B cell (primary cell): ENCODE measurements at regions of chr7 and their contacts with region 1.

Region 1: DNA sequence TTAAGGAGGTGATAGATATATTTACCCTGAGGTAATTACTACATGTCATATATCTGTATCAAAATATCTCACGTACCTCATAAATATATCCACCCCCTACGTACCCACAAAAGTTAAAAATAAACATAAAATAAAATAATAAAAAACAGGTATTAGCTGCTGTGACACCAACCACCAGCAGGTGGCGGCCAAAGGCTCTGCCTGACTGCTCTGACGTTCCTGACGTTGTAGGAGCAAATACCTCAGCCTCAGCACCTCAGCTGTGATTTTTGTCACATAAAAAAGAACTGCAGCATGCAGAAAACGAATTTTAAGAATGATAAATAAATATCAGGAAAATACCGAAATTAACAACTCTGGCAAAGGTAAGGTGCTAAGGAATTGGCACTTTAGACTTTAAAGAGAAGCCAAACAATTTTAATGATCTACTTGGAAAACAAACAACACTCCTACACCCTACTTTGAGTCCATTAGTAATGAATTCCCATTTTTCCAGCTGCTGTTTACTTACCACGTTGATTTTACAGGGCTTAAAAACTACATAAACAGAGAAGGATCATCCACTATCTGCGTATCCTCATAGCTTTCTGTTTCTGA is 125.4 kb upstream of the TARP start:
- DNase-seq: peak; percentile 66
- ATAC-seq: peak; percentile 80
- H3K4me3 ChIP-seq: no peak overlapping the region
- H3K4me3 Mint-ChIP-seq: no peak overlapping the region
- H3K27ac ChIP-seq: no peak overlapping the region
- H3K27ac Mint-ChIP-seq: no peak overlapping the region
- H3K4me1 ChIP-seq: peaks cover 12 to 18% of the 10 kb centered on the region in 2 donors
- H3K4me1 Mint-ChIP-seq: peaks cover 23% of the 10 kb centered on the region
- H3K27me3 ChIP-seq: no peaks in the 10 kb centered on the region
- H3K27me3 Mint-ChIP-seq: peaks cover 8% of the 10 kb centered on the region
- CTCF ChIP-seq: peak; percentile 99

Region 2: GRCh38 chr7:37815671-37816371 is 583.0 kb before region 1 on chr7:
- CTCF ChIA-PET with region 1: no interaction called
- POLR2A ChIA-PET with region 1: no interaction called
- intact Hi-C with region 1: no loop called
- DNase-seq: no peak
- ATAC-seq: no peak
- H3K4me3 ChIP-seq: no peak overlapping the region
- H3K4me3 Mint-ChIP-seq: no peak overlapping the region
- H3K27ac ChIP-seq: no peak overlapping the region
- H3K27ac Mint-ChIP-seq: no peak overlapping the region
- H3K4me1 ChIP-seq: no peaks in the 10 kb centered on the region
- H3K4me1 Mint-ChIP-seq: peaks cover 9% of the 10 kb centered on the region
- H3K27me3 ChIP-seq: no peaks in the 10 kb centered on the region
- H3K27me3 Mint-ChIP-seq: no peaks in the 10 kb centered on the region
- CTCF ChIP-seq: no peak

Region 3: GRCh38 chr7:38086857-38087256 is 312.0 kb before region 1 on chr7:
- CTCF ChIA-PET with region 1: no interaction called
- POLR2A ChIA-PET with region 1: no interaction called
- intact Hi-C with region 1: no loop called
- DNase-seq: no peak
- ATAC-seq: no peak
- H3K4me3 ChIP-seq: no peak overlapping the region
- H3K4me3 Mint-ChIP-seq: no peak overlapping the region
- H3K27ac ChIP-seq: no peak overlapping the region
- H3K27ac Mint-ChIP-seq: no peak overlapping the region
- H3K4me1 ChIP-seq: no peaks in the 10 kb centered on the region
- H3K4me1 Mint-ChIP-seq: no peaks in the 10 kb centered on the region
- H3K27me3 ChIP-seq: no peaks in the 10 kb centered on the region
- H3K27me3 Mint-ChIP-seq: peaks cover 2% of the 10 kb centered on the region
- CTCF ChIP-seq: no peak

Region 4: DNA sequence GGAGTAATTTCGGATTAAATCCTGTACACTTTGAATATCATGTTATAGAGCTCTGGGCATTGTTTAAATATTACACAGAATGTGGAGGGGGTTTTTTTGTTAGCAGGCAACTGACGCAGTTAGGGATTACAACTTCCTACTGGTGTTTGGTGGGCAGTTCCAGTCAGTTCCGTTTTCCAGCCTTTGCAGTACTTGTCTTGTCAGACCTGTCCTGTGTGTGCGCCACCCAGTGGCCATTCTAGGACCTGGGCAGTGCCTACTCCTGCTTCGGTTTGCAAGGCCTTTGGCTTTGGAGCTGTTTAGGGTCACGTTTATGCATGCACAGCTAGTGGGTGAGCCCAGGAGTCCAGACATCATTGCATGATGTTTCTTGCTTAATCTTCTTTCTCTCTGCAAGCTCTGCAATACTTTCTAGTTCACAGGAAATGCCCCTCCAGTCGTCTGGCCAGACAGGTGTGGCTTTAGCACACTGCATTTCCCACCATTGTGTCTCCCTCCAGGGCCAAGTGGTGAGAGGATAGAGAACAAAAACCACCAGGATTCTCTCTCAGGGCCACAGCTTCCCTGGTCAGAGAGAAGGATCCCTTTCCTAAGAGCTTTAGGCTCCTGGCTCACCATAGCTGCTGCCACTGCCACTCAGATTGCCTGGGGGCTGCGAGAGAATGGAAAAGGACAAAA is 28.9 kb before region 1 on chr7:
- CTCF ChIA-PET with region 1: interaction called, 14 read pairs
- POLR2A ChIA-PET with region 1: no interaction called
- intact Hi-C with region 1: no loop called
- DNase-seq: peak; percentile 87
- ATAC-seq: peak; percentile 80
- H3K4me3 ChIP-seq: no peak overlapping the region
- H3K4me3 Mint-ChIP-seq: peak overlapping the region; percentile 2
- H3K27ac ChIP-seq: peak overlapping the region in 1 of 2 donors; percentile 32
- H3K27ac Mint-ChIP-seq: no peak overlapping the region
- H3K4me1 ChIP-seq: peaks cover 10 to 25% of the 10 kb centered on the region in 2 donors
- H3K4me1 Mint-ChIP-seq: peaks cover 18% of the 10 kb centered on the region
- H3K27me3 ChIP-seq: no peaks in the 10 kb centered on the region
- H3K27me3 Mint-ChIP-seq: no peaks in the 10 kb centered on the region
- CTCF ChIP-seq: peak; percentile 74

Region 5: GRCh38 chr7:38542156-38542555 is 143.3 kb after region 1 on chr7:
- CTCF ChIA-PET with region 1: no interaction called
- POLR2A ChIA-PET with region 1: no interaction called
- intact Hi-C with region 1: loop called (anchors 5 kb)
- DNase-seq: no peak
- ATAC-seq: no peak
- H3K4me3 ChIP-seq: no peak overlapping the region
- H3K4me3 Mint-ChIP-seq: no peak overlapping the region
- H3K27ac ChIP-seq: no peak overlapping the region
- H3K27ac Mint-ChIP-seq: no peak overlapping the region
- H3K4me1 ChIP-seq: no peaks in the 10 kb centered on the region
- H3K4me1 Mint-ChIP-seq: no peaks in the 10 kb centered on the region
- H3K27me3 ChIP-seq: peaks cover 0 to 3% (median under 1%) of the 10 kb centered on the region in 4 experiments
- H3K27me3 Mint-ChIP-seq: peaks cover 6% of the 10 kb centered on the region
- CTCF ChIP-seq: no peak

Region 6: GRCh38 chr7:38660427-38661099 is 261.7 kb after region 1 on chr7:
- CTCF ChIA-PET with region 1: interaction called, 116 read pairs
- POLR2A ChIA-PET with region 1: no interaction called
- intact Hi-C with region 1: loop called (anchors 1 kb)
- DNase-seq: peak; percentile 66
- ATAC-seq: peak; percentile 63
- H3K4me3 ChIP-seq: no peak overlapping the region
- H3K4me3 Mint-ChIP-seq: no peak overlapping the region
- H3K27ac ChIP-seq: no peak overlapping the region
- H3K27ac Mint-ChIP-seq: no peak overlapping the region
- H3K4me1 ChIP-seq: no peaks in the 10 kb centered on the region
- H3K4me1 Mint-ChIP-seq: no peaks in the 10 kb centered on the region
- H3K27me3 ChIP-seq: peaks cover 0 to 3% (median 0%) of the 10 kb centered on the region in 4 experiments
- H3K27me3 Mint-ChIP-seq: peaks cover 34% of the 10 kb centered on the region
- CTCF ChIP-seq: peak; percentile 83

Region 7: DNA sequence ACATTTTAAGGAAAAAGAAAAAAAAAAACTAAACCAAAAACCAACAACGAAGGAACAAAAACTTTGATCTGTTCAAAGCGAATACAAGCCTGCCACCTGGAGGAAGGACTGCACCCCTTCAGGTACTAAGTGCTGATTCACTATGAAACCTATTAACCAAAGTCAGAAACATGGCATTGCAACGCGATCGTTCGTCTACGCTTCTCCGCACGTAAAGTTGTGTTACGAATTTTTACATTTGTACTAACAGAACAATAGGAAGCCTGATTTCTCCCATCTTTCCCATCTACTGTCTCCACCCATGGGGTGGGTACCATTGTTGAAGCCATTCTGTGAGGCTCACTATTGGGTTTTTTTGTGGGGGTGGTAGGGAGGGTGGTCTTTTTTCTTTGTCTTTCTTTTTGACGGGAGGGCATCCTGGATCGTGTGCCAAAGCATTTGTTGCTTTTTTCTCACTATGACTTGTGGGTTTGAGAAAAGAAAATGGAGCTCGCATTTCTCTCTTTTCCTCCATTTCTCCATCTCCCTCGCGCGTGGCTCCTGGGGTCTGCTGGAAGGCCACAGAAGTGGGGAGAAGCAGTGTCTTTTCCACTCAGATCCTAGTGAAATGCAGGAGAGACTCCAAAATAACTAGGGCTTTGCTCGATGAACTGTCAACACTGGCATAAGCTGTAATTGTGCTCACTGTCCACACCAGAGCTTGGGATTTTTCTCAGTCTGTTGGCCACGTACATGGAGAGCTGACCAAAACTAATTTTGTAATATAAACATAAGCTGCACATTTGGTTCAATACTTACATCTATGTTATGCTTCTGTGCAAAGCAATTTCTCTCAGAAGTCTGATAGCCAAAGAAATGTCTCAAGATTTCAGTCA is 1066.5 kb after region 1 on chr7:
- CTCF ChIA-PET with region 1: interaction called, 4 read pairs
- POLR2A ChIA-PET with region 1: no interaction called
- intact Hi-C with region 1: loop called (anchors 5 kb)
- DNase-seq: peak; percentile 51
- ATAC-seq: no peak
- H3K4me3 ChIP-seq: no peak overlapping the region
- H3K4me3 Mint-ChIP-seq: no peak overlapping the region
- H3K27ac ChIP-seq: no peak overlapping the region
- H3K27ac Mint-ChIP-seq: no peak overlapping the region
- H3K4me1 ChIP-seq: peaks cover 3 to 6% of the 10 kb centered on the region in 2 donors
- H3K4me1 Mint-ChIP-seq: peaks cover 4% of the 10 kb centered on the region
- H3K27me3 ChIP-seq: peaks cover 0 to 3% (median 0%) of the 10 kb centered on the region in 4 experiments
- H3K27me3 Mint-ChIP-seq: peaks cover 14% of the 10 kb centered on the region
- CTCF ChIP-seq: peak; percentile 77